ENCODE measurements at regions of chr2 and their contacts with region 1.

Region 1: GRCh38 chr2:199704358-199705238 is 146.4 kb downstream of the FTCDNL1 start:
- DNase-seq: no peak
- H3K4me3 ChIP-seq: no peak overlapping the region
- H3K27ac ChIP-seq: no peak overlapping the region
- H3K4me1 ChIP-seq: no peaks in the 10 kb centered on the region
- H3K27me3 ChIP-seq: no peaks in the 10 kb centered on the region
- CTCF ChIP-seq: peak; percentile 42 to 54 (median 45)
- EP300 ChIP-seq: no peak
- POLR2A ChIP-seq: no peak

Region 2: DNA sequence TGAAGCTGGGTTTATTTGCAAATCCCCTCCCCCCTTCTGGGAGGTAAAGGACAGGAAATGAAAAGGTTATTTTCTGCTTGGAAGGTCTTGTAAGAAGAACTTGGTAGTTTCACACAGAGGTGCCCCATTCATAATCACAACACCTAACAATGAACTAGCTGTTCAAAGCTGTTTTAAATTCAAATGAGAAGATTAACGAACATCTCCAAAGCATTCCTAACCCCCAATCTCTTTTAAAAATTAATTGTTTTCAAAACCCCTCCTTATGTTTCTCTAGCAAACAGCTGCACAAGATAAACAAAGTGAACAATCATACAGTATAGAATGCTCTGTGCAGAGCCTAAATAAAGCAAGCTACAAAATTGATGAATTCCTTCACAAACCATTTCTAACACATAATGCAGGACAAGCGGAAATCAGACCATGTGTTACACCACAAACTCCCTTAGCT is 518.3 kb before region 1 on chr2:
- intact Hi-C with region 1: no loop called
- DNase-seq: no peak
- H3K4me3 ChIP-seq: no peak overlapping the region
- H3K27ac ChIP-seq: no peak overlapping the region
- H3K4me1 ChIP-seq: no peaks in the 10 kb centered on the region
- H3K27me3 ChIP-seq: no peaks in the 10 kb centered on the region
- CTCF ChIP-seq: no peak
- EP300 ChIP-seq: no peak
- POLR2A ChIP-seq: no peak

Region 3: GRCh38 chr2:199861132-199861774 is 156.7 kb after region 1 on chr2:
- intact Hi-C with region 1: loop called (anchors 5 kb)
- DNase-seq: no peak
- H3K4me3 ChIP-seq: no peak overlapping the region
- H3K27ac ChIP-seq: no peak overlapping the region
- H3K4me1 ChIP-seq: no peaks in the 10 kb centered on the region
- H3K27me3 ChIP-seq: no peaks in the 10 kb centered on the region
- CTCF ChIP-seq: peak; percentile 54 to 66 (median 59)
- EP300 ChIP-seq: no peak
- POLR2A ChIP-seq: no peak

Measured in esophagus muscularis mucosa (tissue), 4 donors.